ENCODE measurements at regions of chr12 and their contacts with region 1.

Region 1: GRCh38 chr12:66169221-66170170 is at the start of gene TMBIM4:
- DNase-seq: peak; percentile 84
- ATAC-seq: peak; percentile 85
- H3K4me3 Mint-ChIP-seq: peak within 1 kb of the TSS; percentile 98
- H3K27ac Mint-ChIP-seq: peak within 1 kb of the TSS; percentile 100
- H3K4me1 Mint-ChIP-seq: peaks cover 47% of the 10 kb centered on the region
- H3K27me3 Mint-ChIP-seq: no peaks in the 10 kb centered on the region
- CTCF ChIP-seq: no peak
- total RNA-seq, gene TMBIM4: 91.8 and 93.5 TPM in 2 replicates

Region 2: GRCh38 chr12:66144791-66145754 is 24.4 kb before region 1 on chr12:
- CTCF ChIA-PET with region 1: no interaction called
- POLR2A ChIA-PET with region 1: interaction called, 7 read pairs
- intact Hi-C with region 1: loop called (anchors 2 kb)
- DNase-seq: no peak
- ATAC-seq: no peak
- H3K4me3 Mint-ChIP-seq: no peak overlapping the region
- H3K27ac Mint-ChIP-seq: peak overlapping the region; percentile 56
- H3K4me1 Mint-ChIP-seq: peaks cover 20% of the 10 kb centered on the region
- H3K27me3 Mint-ChIP-seq: no peaks in the 10 kb centered on the region
- CTCF ChIP-seq: no peak

Region 3: GRCh38 chr12:66196806-66197205 is 27.3 kb after region 1 on chr12:
- CTCF ChIA-PET with region 1: interaction called, 7 read pairs
- POLR2A ChIA-PET with region 1: interaction called, 34 read pairs
- intact Hi-C with region 1: loop called (anchors 1 kb)
- DNase-seq: no peak
- ATAC-seq: peak; percentile 95
- H3K4me3 Mint-ChIP-seq: peak overlapping the region; percentile 52
- H3K27ac Mint-ChIP-seq: peak overlapping the region; percentile 41
- H3K4me1 Mint-ChIP-seq: peaks cover 32% of the 10 kb centered on the region
- H3K27me3 Mint-ChIP-seq: peaks cover 11% of the 10 kb centered on the region
- CTCF ChIP-seq: no peak

Region 4: DNA sequence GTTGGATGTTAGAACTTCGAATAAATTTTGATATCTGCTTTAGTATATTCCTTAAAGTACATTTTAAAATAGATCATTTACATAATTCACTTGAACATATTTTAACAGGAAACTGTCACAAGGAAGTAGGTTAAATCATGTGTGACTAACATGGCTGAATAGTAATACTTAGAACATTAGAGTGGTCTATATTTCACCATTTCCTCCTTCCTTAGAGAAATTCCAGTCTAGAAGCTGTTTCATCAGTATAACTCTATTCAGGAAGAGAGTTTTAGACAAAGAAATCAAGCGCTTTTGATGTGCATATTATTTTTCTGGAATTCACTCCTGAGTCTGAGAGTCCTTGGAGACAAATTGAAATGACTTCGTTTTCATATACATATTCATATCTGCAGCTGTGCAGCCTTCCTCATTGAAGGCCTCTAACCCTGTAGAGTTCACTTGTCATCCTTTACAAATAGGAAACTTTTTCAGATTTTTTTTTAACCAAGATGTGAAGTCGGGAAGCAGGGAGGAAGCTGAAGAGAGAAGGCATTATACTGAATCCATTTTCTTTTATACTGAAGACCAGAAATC is 47.9 kb after region 1 on chr12:
- CTCF ChIA-PET with region 1: interaction called, 3 read pairs
- POLR2A ChIA-PET with region 1: interaction called, 22 read pairs
- intact Hi-C with region 1: no loop called
- DNase-seq: no peak
- ATAC-seq: peak; percentile 71
- H3K4me3 Mint-ChIP-seq: peak overlapping the region; percentile 55
- H3K27ac Mint-ChIP-seq: peak overlapping the region; percentile 89
- H3K4me1 Mint-ChIP-seq: peaks cover 30% of the 10 kb centered on the region
- H3K27me3 Mint-ChIP-seq: no peaks in the 10 kb centered on the region
- CTCF ChIP-seq: no peak

Region 5: GRCh38 chr12:66301944-66302826 is 132.7 kb after region 1 on chr12 and contains the start of gene HELB:
- CTCF ChIA-PET with region 1: no interaction called
- POLR2A ChIA-PET with region 1: interaction called, 45 read pairs
- intact Hi-C with region 1: loop called (anchors 1 kb)
- DNase-seq: peak; percentile 80
- ATAC-seq: peak; percentile 95
- H3K4me3 Mint-ChIP-seq: peak within 1 kb of the TSS; percentile 99
- H3K27ac Mint-ChIP-seq: peak within 1 kb of the TSS; percentile 86
- H3K4me1 Mint-ChIP-seq: peaks cover 41% of the 10 kb centered on the region
- H3K27me3 Mint-ChIP-seq: peaks cover 1% of the 10 kb centered on the region
- CTCF ChIP-seq: no peak
- total RNA-seq, gene HELB: 4.7 and 7.2 TPM in 2 replicates

Measured in activated B cell treated with CpG ODN at 0.5 μM for 24 hours (primary cell).